Activated CD8-positive, alpha-beta T cell treated with anti-CD3 and anti-CD28 coated beads, Interleukin-2, amount 10 ng/mL, durations not matched to agents 7 days and 5 days (primary cell): ENCODE measurements at regions of chr3 and their contacts with region 1.

Region 1: DNA sequence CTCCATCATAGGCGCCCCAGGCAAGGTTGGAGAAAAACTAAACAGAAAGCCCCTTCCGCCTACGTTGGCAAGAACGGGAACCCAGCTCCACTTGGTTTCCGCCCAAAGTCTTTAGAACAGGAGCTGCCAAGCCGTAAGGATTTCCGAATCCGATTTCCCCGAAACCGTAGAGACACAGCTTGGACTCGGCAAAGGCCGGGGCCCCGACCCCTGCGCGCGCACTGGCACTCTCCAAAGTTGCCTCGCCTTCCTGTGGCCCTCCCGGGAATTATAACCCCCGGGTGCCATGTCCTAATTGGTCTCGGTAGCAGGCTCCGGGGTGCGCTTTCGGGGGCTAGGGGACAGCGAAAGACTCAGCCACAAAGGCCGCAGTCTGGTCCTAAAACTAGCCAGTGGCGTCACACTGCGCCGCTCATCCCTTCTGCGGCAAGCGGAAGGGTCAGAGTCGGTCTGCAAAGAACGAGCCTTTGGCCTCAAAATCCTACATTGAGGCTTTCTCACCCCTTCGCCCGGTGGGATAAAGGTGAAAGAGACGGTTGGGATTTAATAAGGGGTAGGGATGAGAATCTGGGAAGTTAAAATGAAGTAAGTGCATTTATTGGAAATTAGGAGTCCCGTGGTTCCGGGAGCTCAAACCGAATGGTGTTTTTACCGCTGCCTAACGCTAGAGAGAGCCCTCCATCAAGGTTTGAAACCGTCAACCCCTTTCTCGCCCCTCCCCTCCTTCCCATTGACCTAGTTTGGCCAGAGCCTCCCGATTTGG is 6.8 kb downstream of the BCL6 start:
- DNase-seq: peak; percentile 84
- ATAC-seq: peak; percentile 24
- H3K4me3 Mint-ChIP-seq: peak overlapping the region; percentile 100
- H3K27ac Mint-ChIP-seq: peak overlapping the region; percentile 100
- H3K4me1 Mint-ChIP-seq: peaks cover 53% of the 10 kb centered on the region
- H3K27me3 Mint-ChIP-seq: no peaks in the 10 kb centered on the region

Region 2: DNA sequence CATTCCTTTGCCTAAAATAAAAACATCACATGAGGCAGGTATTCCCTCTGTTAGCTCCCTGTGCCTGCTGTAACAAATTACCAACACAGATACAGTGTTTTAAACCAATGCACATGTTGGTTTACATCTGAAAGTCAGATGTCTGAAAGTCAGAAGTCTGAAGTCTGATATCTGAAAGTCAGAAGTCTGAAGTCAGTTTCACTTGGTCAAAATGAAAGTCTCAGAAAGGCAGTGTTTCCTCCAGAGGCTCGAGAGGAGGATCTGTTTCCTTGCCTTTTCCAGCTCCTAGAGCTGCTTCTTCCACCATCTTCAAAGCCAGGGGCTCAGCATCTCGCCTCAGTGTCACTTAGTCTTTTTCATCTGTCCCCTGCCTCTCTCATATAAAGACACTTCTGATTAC is 90.3 kb before region 1 on chr3:
- CTCF ChIA-PET with region 1: no interaction called
- POLR2A ChIA-PET with region 1: no interaction called
- DNase-seq: no peak
- ATAC-seq: no peak
- H3K4me3 Mint-ChIP-seq: no peak overlapping the region
- H3K27ac Mint-ChIP-seq: no peak overlapping the region
- H3K4me1 Mint-ChIP-seq: no peaks in the 10 kb centered on the region
- H3K27me3 Mint-ChIP-seq: peaks cover 33% of the 10 kb centered on the region

Region 3: DNA sequence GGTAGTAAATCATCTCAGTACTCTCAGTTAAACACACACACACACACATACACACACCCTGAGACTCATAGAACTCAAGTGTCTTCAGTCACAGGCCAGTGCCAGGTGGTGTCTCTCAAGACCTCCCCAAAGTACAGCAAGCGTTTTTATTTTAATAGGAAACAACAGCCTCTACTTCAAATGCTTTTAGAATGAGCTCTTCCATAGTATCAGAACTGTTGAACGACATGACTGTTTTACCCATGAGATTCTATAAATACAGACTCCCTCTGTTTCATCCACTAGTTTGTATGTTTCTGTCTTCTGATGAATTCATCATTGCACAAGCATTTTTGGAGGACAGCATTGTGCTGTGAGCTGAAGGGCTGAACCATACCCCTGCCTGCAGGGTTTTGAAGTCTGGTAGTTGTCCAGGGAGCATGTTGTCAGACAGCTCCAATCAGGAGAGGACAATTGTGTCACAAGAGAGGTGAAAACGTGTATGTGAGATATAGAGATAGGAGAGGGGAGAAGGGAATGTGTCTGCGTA is 207.7 kb after region 1 on chr3:
- CTCF ChIA-PET with region 1: interaction called, 10 read pairs
- POLR2A ChIA-PET with region 1: no interaction called
- DNase-seq: no peak
- ATAC-seq: no peak
- H3K4me3 Mint-ChIP-seq: no peak overlapping the region
- H3K27ac Mint-ChIP-seq: peak overlapping the region; percentile 17
- H3K4me1 Mint-ChIP-seq: peaks cover 30% of the 10 kb centered on the region
- H3K27me3 Mint-ChIP-seq: no peaks in the 10 kb centered on the region

Region 4: GRCh38 chr3:188061133-188061532 is 322.6 kb after region 1 on chr3:
- CTCF ChIA-PET with region 1: interaction called, 11 read pairs
- POLR2A ChIA-PET with region 1: no interaction called
- DNase-seq: peak; percentile 79
- ATAC-seq: peak; percentile 96
- H3K4me3 Mint-ChIP-seq: peak overlapping the region; percentile 24
- H3K27ac Mint-ChIP-seq: peak overlapping the region; percentile 83
- H3K4me1 Mint-ChIP-seq: peaks cover 31% of the 10 kb centered on the region
- H3K27me3 Mint-ChIP-seq: no peaks in the 10 kb centered on the region

Region 5: DNA sequence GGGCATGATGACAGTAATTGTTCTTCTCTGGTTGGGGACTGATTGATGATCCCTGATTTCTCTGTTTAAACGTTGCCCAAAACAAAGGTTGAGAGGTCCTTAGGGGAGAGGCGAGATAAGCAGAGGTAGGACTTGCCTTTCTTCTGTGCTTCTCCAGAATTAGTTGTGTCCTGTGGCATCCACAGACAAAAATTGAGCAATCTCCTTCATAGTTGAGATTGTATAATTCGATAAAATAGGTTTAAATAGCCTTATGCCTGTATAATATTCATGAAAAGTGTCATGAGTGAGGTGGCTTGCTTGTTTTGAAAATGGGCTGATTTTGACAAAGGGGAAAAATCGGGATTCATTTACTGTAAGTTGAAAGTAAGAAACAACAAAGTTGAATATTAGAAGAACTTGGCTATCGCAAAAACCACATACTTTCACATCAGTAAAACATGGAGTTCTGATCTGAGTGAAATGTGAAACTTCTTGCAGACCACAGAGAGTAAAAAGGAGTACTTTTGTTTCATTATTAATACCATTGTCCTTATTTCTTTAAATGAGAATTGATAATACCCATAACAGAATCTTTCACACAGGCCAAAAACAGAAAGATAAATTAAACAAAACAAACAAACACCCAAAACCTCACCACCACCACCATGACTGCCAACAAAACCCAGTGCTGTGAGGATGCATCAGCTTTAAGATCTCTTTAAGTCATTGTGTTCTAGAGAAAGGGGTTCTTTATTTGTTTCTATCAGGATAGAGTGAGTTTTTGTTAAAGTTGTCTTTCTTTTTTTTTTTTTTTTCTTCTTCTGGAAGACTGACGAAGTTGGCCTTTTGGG is 571.1 kb after region 1 on chr3:
- CTCF ChIA-PET with region 1: interaction called, 11 read pairs
- POLR2A ChIA-PET with region 1: interaction called, 5 read pairs
- DNase-seq: peak; percentile 53
- ATAC-seq: peak; percentile 87
- H3K4me3 Mint-ChIP-seq: peak overlapping the region; percentile 42
- H3K27ac Mint-ChIP-seq: peak overlapping the region; percentile 71
- H3K4me1 Mint-ChIP-seq: peaks cover 25% of the 10 kb centered on the region
- H3K27me3 Mint-ChIP-seq: no peaks in the 10 kb centered on the region

Region 6: DNA sequence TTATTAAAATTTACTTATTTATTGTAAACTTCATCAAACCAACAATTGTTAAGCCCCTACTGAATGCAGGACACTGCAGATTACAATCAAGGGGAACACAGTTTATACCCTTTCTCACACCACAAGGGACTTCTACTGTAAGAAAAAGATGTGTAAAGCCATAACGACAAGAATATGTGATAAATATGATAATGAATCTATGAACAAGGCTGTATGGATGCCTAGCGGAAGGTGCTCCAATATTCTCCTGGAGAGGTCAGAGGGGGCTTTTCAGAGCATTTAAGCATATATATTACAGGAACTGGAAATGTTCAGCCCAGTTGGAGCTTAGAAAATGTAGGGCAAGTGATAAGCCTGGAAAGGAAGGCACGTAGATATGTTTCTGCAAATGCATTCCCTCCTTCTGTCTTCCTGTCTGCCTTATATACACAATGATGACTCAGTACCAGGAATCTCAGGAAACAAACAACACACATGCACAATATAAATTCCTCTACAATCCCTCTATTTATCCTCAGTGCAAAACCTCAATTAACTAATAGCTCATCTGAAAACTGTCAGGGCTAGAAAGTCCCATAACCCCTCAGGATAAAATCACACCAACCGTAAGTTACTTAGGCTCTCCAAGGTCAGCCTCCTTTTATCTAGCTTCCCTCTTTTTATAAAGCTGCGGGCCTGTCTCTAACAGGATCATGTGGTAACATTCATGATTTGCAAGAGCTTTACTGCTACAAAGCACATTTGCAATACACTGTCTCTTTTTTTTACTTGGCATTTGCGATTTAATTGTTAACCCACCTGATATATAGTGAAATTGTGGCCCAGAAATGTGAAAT is 808.5 kb after region 1 on chr3:
- CTCF ChIA-PET with region 1: interaction called, 19 read pairs
- POLR2A ChIA-PET with region 1: no interaction called
- DNase-seq: no peak
- ATAC-seq: no peak
- H3K4me3 Mint-ChIP-seq: no peak overlapping the region
- H3K27ac Mint-ChIP-seq: no peak overlapping the region
- H3K4me1 Mint-ChIP-seq: peaks cover 3% of the 10 kb centered on the region
- H3K27me3 Mint-ChIP-seq: no peaks in the 10 kb centered on the region

Region 7: GRCh38 chr3:189041482-189042090 is 1303.1 kb after region 1 on chr3:
- CTCF ChIA-PET with region 1: interaction called, 104 read pairs
- POLR2A ChIA-PET with region 1: interaction called, 16 read pairs
- DNase-seq: peak; percentile 83
- ATAC-seq: peak; percentile 97
- H3K4me3 Mint-ChIP-seq: no peak overlapping the region
- H3K27ac Mint-ChIP-seq: peak overlapping the region; percentile 48
- H3K4me1 Mint-ChIP-seq: peaks cover 42% of the 10 kb centered on the region
- H3K27me3 Mint-ChIP-seq: no peaks in the 10 kb centered on the region